Activated T-helper 2 cell treated with anti-CD3 and anti-CD28 coated beads, Interferon-gamma antibody, Interleukin-2, Interleukin-4, amounts not matched to agents 10 μg/mL and 5 μg/mL and 100 μg/mL, durations not matched to agents 14 hours and 24 hours and 36 hours (primary cell): ENCODE measurements at regions of chr19 and their contacts with region 1.

Region 1: DNA sequence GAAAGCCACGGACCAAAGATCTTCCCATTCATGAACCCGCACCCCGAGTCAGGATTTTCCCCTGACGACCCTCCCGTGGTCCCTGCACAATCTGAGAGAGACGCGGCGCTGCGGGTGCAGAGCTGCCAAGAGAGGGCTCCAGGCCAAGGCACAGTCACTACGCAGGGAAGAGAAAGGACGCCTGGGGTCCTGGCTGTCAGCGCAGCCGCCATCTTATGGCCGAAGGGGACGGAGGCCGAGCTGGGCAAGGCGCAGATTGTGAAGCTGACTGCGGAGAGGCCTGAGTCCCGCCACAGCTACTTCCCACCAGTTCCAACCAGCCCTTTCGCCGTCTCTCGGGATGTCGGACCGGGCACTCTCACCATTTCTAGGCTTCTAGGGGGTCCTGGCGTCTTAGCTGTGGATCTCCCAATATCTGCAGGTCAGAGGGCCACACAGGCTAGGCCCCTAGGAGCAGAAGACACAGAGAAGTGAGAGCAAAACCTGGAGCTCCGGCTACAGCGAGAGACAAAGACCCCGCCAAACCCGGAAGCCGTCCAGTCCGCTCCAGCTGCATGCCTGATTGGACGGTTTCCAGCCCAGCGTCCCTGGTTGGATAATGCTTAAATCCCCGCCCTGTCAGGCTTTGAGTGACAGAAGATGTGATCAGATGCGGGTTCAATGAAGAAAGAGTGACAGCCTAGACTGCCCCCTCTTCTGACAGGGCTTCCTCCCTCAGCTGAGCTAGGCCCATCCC is at the start of gene ZNF100:
- DNase-seq: peak; percentile 82
- H3K4me3 Mint-ChIP-seq: peak within 1 kb of the TSS; percentile 96
- H3K27ac Mint-ChIP-seq: peak within 1 kb of the TSS; percentile 91
- H3K4me1 Mint-ChIP-seq: peaks cover 18% of the 10 kb centered on the region
- H3K27me3 Mint-ChIP-seq: no peaks in the 10 kb centered on the region
- total RNA-seq, gene ZNF100: 21.6 and 24.3 TPM in 2 replicates

Region 2: GRCh38 chr19:21568816-21569493 is 198.3 kb before region 1 on chr19:
- intact Hi-C with region 1: loop called (anchors 5 kb)
- DNase-seq: peak; percentile 77
- H3K4me3 Mint-ChIP-seq: peak overlapping the region; percentile 97
- H3K27ac Mint-ChIP-seq: peak overlapping the region; percentile 96
- H3K4me1 Mint-ChIP-seq: peaks cover 6% of the 10 kb centered on the region
- H3K27me3 Mint-ChIP-seq: no peaks in the 10 kb centered on the region

Region 3: GRCh38 chr19:21835810-21836444 is 68.7 kb after region 1 on chr19 and contains the start of gene ZNF43:
- intact Hi-C with region 1: loop called (anchors 5 kb)
- DNase-seq: peak; percentile 89
- H3K4me3 Mint-ChIP-seq: peak within 1 kb of the TSS; percentile 94
- H3K27ac Mint-ChIP-seq: peak within 1 kb of the TSS; percentile 98
- H3K4me1 Mint-ChIP-seq: peaks cover 11% of the 10 kb centered on the region
- H3K27me3 Mint-ChIP-seq: no peaks in the 10 kb centered on the region
- total RNA-seq, gene ZNF43: 33.5 and 34.9 TPM in 2 replicates

Region 4: DNA sequence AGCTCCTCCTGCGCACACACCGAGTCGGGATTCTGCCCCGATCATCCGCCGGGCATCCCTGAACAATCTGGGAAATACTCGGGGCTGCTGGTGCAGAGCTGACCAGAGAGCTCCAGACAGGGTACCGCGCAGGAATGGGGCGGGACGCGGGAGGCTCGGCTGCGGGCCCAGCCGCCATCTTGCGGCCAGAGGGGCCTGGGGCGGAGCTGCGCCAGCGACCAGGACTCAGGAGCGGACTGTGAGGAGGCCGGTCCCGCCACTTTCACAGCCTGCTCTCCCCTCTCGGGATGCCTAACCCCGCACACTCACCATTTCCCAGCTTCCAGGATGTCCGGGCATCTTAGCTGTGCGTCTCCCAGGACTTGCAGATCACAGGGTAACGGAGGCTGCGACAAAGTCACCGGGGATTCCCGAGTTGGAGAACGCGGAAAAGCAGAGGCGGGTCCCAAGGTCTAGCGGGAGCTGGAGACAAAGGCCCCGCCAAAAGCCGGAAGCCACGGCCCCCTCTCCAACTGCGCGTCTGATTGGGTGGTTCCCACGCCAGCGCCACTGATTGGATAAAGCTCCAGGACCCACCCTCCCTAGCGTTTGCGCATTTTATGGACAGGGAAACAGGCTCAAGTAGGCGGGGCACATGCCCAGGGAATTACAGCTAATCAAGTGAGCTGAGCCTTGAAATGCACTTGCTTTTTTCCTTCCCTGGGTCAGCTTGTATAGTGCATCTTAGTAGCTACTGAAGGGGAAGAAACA is 84.5 kb after region 1 on chr19:
- intact Hi-C with region 1: loop called (anchors 1 kb)
- DNase-seq: peak; percentile 83
- H3K4me3 Mint-ChIP-seq: peak overlapping the region; percentile 85
- H3K27ac Mint-ChIP-seq: peak overlapping the region; percentile 75
- H3K4me1 Mint-ChIP-seq: peaks cover 14% of the 10 kb centered on the region
- H3K27me3 Mint-ChIP-seq: no peaks in the 10 kb centered on the region